ENCODE measurements at regions of chr21 and their contacts with region 1.

Region 1: DNA sequence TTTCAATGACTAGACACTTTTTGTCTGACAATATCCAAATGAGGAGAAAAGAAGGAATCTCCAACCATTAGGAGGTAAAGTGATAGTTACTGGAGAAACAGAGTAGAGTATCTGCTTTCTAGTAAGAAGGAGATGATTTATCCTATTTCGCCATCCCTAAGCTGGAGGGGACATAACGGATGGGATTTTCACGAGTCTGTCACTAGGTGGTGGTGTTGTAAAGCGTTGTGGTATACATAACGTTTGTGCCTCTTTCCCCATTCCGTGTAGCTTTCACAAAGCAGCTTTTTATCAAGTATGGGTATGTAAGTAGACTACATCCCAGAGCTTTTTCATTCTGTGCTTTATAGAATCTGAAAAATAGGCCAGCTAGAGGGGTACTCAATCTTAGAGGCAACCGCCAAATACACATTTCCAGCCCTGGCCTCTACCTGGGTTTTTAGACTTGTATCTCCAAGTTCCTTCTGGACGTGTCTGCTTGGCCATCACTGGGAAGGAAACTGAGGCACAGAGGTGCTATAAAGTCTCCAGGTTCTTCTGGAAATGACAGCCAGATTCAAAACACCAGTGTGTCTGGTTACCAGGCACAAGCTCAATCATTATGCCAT is 33.3 kb upstream of the FAM3B start:
- DNase-seq: peak; percentile 41 to 66 (median 65)
- H3K4me3 ChIP-seq: no peak overlapping the region
- H3K4me3 Mint-ChIP-seq: no peak overlapping the region
- H3K27ac ChIP-seq: no peak overlapping the region
- H3K27ac Mint-ChIP-seq: no peak overlapping the region
- H3K4me1 ChIP-seq: no peaks in the 10 kb centered on the region
- H3K4me1 Mint-ChIP-seq: peaks cover 0 to 1% (median 0%) of the 10 kb centered on the region in 4 donors
- H3K27me3 ChIP-seq: no peaks in the 10 kb centered on the region
- H3K27me3 Mint-ChIP-seq: peaks cover 9 to 24% of the 10 kb centered on the region in 2 donors

Region 2: DNA sequence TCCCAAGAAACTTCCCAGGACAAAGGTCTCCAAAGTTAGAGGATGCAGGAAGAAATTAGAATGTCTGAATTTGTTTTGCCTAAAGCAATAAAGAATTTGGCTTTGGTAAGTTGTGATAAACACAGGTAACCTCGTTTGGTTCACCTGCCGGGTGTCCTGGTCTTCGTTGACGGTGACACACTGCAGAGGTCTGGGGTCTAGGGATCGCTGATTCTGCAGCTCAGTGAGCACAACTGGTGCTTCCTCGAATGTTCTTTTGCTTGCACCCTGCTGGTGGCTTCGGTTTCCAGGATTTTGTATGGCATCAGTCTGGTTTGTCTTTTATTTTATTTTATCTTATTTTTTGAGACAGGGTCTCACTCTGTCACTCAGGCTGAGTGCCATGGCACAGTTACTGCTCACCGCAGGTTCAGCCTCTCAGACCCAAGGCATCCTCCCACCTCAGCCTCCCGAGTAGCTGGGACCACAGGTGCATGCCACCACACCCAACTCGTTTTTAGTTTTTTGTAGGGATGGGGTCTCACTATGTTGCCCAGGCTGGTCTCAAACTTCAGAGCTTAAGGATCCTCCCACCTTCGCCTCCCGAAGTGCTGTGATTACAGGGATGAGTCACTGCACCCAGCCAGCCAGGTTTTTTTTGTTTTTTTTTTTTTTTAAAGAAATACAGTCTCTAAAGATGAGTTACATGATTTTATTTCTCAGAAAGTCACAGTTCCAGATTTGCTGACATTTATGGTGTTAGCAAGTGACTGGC is 86.5 kb before region 1 on chr21:
- CTCF ChIA-PET with region 1: no interaction called
- POLR2A ChIA-PET with region 1: no interaction called
- intact Hi-C with region 1: no loop called
- DNase-seq: no peak
- H3K4me3 ChIP-seq: no peak overlapping the region
- H3K4me3 Mint-ChIP-seq: no peak overlapping the region
- H3K27ac ChIP-seq: no peak overlapping the region
- H3K27ac Mint-ChIP-seq: no peak overlapping the region
- H3K4me1 ChIP-seq: no peaks in the 10 kb centered on the region
- H3K4me1 Mint-ChIP-seq: no peaks in the 10 kb centered on the region
- H3K27me3 ChIP-seq: no peaks in the 10 kb centered on the region
- H3K27me3 Mint-ChIP-seq: peaks cover 7 to 11% of the 10 kb centered on the region in 2 donors

Region 3: GRCh38 chr21:41228021-41228400 is 55.3 kb before region 1 on chr21:
- CTCF ChIA-PET with region 1: no interaction called
- POLR2A ChIA-PET with region 1: no interaction called
- intact Hi-C with region 1: no loop called
- DNase-seq: no peak
- H3K4me3 ChIP-seq: no peak overlapping the region
- H3K4me3 Mint-ChIP-seq: no peak overlapping the region
- H3K27ac ChIP-seq: no peak overlapping the region
- H3K27ac Mint-ChIP-seq: no peak overlapping the region
- H3K4me1 ChIP-seq: no peaks in the 10 kb centered on the region
- H3K4me1 Mint-ChIP-seq: no peaks in the 10 kb centered on the region
- H3K27me3 ChIP-seq: no peaks in the 10 kb centered on the region
- H3K27me3 Mint-ChIP-seq: peaks cover 6 to 14% of the 10 kb centered on the region in 2 donors

Region 4: GRCh38 chr21:41241316-41242035 is 41.8 kb before region 1 on chr21:
- CTCF ChIA-PET with region 1: no interaction called
- POLR2A ChIA-PET with region 1: no interaction called
- intact Hi-C with region 1: no loop called
- DNase-seq: no peak
- H3K4me3 ChIP-seq: no peak overlapping the region
- H3K4me3 Mint-ChIP-seq: no peak overlapping the region
- H3K27ac ChIP-seq: no peak overlapping the region
- H3K27ac Mint-ChIP-seq: no peak overlapping the region
- H3K4me1 ChIP-seq: no peaks in the 10 kb centered on the region
- H3K4me1 Mint-ChIP-seq: no peaks in the 10 kb centered on the region
- H3K27me3 ChIP-seq: no peaks in the 10 kb centered on the region
- H3K27me3 Mint-ChIP-seq: peaks cover 0 to 3% of the 10 kb centered on the region in 2 donors

Region 5: DNA sequence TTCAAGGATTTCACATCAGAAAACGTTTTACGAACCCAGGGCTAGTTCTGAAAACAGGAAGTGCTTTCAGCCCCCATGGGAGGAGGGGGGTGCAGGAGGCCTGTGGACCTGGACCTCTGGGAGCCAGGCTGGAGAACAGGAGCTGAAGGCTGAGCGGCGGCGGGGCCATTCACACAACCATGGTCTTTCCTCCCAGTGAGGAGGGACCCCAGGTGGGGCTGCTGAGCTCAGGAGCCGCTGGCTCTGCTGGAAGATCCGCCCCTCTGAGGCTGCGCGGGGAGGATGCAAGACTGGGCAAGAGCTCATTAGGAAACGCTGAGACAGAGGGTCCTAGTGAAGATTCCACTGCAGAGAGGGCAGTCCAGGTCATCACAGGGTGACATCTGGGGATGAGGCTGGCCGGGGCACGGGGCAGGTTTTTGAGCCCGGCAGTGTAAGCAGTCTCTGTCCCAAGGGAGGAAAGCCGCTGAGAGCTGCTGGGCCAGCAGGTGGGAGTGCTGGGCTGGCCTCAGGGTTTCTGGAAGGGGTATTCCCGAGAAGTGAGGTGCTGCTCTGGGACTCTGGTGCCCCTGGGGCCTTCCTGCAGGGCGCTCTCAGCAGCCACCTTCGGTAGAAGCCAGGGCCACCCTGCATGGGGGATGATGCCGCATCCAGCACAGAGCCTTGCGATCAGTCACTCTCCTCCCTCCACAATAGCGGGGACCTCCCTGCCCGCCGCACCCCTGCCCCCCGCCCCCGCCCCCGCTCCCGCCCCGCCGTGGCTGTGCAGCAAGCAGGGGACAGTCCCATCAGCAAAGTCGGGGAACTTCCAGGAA is 86.0 kb after region 1 on chr21:
- CTCF ChIA-PET with region 1: interaction called, 12 read pairs
- POLR2A ChIA-PET with region 1: interaction called, 11 read pairs
- intact Hi-C with region 1: no loop called
- DNase-seq: peak in 4 of 5 donors; percentile 22 to 65 (median 34)
- H3K4me3 ChIP-seq: peak overlapping the region; percentile 57 to 80
- H3K4me3 Mint-ChIP-seq: peak overlapping the region; percentile 87 to 97 (median 90)
- H3K27ac ChIP-seq: peak overlapping the region; percentile 69
- H3K27ac Mint-ChIP-seq: peak overlapping the region; percentile 90 to 96 (median 94)
- H3K4me1 ChIP-seq: peaks cover 68% of the 10 kb centered on the region
- H3K4me1 Mint-ChIP-seq: peaks cover 47 to 90% (median 70%) of the 10 kb centered on the region in 4 donors
- H3K27me3 ChIP-seq: no peaks in the 10 kb centered on the region
- H3K27me3 Mint-ChIP-seq: no peaks in the 10 kb centered on the region

Region 6: GRCh38 chr21:41411449-41412089 is 128.3 kb after region 1 on chr21:
- CTCF ChIA-PET with region 1: interaction called, 15 read pairs
- POLR2A ChIA-PET with region 1: no interaction called
- intact Hi-C with region 1: no loop called
- DNase-seq: peak in 1 of 5 donors; percentile 12
- H3K4me3 ChIP-seq: no peak overlapping the region
- H3K4me3 Mint-ChIP-seq: no peak overlapping the region
- H3K27ac ChIP-seq: no peak overlapping the region
- H3K27ac Mint-ChIP-seq: peak overlapping the region in 3 of 7 donors; percentile 19 to 35 (median 29)
- H3K4me1 ChIP-seq: no peaks in the 10 kb centered on the region
- H3K4me1 Mint-ChIP-seq: peaks cover 0 to 7% (median 0%) of the 10 kb centered on the region in 4 donors
- H3K27me3 ChIP-seq: no peaks in the 10 kb centered on the region
- H3K27me3 Mint-ChIP-seq: no peaks in the 10 kb centered on the region

Region 7: DNA sequence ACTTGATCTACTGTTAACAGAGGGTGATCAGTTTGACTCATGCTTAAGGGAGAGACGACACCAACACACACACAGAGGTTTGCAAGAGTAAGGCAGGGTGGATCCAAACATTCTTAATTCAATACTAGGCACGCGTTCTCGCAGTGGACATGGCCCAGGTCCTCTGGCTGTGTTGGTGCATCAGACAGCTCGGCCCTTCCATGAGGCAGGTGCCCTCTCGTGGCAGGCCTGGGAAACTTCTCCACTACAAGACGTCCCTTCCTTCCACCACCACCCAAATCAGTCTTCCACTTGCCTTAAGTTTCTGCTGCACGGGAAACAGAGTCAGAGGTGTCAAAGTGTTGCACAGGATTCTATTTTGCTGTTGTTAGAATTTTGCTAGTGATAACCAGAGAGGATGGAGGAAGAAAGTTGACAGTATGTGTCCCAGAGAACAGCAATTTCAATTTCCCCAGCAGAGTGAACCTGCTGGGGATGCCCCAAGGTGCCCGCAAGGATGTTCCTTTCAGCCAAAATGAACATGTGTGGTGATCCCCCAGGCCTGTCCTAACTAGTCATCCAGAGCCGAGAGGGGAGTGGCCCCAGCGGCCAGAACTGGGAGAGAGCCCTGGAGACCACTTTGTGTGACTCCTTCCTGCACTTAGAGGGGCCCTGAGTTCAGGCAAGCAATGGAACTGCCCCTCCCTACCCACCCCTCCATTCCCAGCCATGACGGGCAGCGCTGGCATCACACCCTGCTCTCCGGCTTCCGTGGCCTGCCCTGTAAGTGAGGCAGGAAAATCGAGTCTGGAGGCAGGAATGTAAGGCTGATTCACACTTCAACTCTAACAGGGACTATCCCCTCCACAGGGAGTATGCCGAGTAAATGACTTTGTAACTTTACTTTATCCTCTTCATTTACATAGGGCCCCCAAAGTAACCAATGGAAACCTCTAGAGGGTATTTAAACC is 177.5 kb after region 1 on chr21:
- CTCF ChIA-PET with region 1: interaction called, 168 read pairs
- POLR2A ChIA-PET with region 1: interaction called, 10 read pairs
- intact Hi-C with region 1: no loop called
- DNase-seq: peak; percentile 37 to 52 (median 46)
- H3K4me3 ChIP-seq: no peak overlapping the region
- H3K4me3 Mint-ChIP-seq: no peak overlapping the region
- H3K27ac ChIP-seq: no peak overlapping the region
- H3K27ac Mint-ChIP-seq: peak overlapping the region in 5 of 7 donors; percentile 1 to 50 (median 39)
- H3K4me1 ChIP-seq: no peaks in the 10 kb centered on the region
- H3K4me1 Mint-ChIP-seq: peaks cover 0 to 9% (median 6%) of the 10 kb centered on the region in 4 donors
- H3K27me3 ChIP-seq: no peaks in the 10 kb centered on the region
- H3K27me3 Mint-ChIP-seq: no peaks in the 10 kb centered on the region

Region 8: DNA sequence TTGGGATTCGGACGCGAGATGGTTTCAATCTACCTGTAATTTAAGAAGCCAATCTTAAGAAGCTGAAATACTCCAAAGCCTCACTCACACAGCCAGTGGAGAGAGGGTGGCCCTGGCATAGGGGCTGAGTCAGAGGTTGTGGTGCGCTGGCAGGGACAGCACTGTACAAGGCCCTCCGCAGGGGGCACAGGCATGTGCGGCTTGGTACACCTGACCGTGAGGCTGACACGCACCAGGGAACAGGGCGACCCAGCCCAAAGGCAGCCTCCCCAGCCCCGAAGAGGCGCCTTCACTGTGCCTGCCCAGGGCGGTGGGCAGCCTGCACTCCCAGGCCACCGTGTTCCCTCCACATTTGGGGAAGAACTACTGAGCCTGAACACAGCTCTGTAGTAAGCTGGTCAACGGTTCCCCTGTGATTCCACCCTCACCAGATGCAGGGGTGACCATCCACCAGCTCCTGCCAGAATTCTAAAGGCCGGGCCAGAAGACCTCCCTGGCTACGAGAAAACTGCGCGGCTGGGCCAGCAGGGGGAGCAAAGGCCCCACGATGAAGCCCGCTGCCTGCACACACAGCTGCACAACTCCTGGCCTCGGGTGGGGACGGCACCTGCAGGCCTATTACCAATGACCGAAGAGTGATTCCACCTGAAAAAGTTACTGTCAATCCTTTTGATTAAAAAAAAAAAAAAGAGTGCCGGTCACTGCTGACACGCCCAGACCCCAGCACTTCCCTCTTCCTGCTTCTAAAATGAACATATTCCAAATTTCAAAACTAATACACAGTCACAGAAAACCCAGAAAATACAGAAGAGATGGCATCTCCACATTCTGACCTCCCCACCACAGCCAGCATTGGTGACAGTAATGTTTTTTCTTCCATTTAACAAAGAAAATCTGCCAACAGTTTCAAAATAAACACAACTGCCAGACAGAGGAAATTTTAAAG is 533.2 kb after region 1 on chr21:
- CTCF ChIA-PET with region 1: interaction called, 19 read pairs
- POLR2A ChIA-PET with region 1: no interaction called
- intact Hi-C with region 1: no loop called
- DNase-seq: peak; percentile 41 to 54 (median 46)
- H3K4me3 ChIP-seq: no peak overlapping the region
- H3K4me3 Mint-ChIP-seq: no peak overlapping the region
- H3K27ac ChIP-seq: no peak overlapping the region
- H3K27ac Mint-ChIP-seq: peak overlapping the region in 2 of 7 donors; percentile 31 to 47
- H3K4me1 ChIP-seq: no peaks in the 10 kb centered on the region
- H3K4me1 Mint-ChIP-seq: peaks cover 0 to 8% (median 2%) of the 10 kb centered on the region in 4 donors
- H3K27me3 ChIP-seq: no peaks in the 10 kb centered on the region
- H3K27me3 Mint-ChIP-seq: no peaks in the 10 kb centered on the region

Region 9: DNA sequence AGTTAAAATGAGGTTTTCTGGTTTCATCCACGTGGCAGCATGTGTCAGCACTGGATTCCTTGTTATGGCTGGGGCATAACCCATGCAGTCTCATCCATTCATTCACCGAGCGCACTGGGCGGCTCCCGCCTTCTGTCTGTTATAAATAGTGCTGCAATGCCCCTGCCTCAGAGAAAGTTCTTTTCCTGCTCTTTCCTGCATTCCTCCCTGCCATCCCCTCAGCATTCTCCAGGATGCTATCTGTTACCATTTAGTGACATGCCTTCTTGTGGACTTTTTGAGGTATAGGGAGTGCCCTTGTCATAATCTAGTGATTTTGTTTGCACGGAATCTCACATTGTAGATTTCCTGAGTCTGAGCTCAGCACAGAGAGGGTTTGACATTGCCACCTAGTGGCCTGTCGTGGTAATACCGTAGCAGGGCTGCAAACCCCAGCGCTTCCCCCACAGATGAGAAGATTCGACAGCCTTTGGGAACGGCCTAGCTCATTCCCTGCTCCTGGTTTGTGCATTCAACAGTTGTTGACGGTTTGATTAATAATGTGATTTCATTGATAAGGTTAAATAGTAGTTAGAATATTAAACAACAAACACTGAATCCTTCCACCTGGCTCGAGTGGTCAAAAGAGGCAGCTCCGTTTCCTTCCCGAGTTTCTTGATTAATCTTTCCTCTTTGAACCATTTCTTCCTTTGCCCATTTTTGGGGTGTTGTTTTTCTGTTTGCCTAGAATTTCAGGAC is 834.1 kb after region 1 on chr21:
- CTCF ChIA-PET with region 1: interaction called, 18 read pairs
- POLR2A ChIA-PET with region 1: interaction called, 3 read pairs
- intact Hi-C with region 1: loop called (anchors 1 kb)
- DNase-seq: peak; percentile 48 to 72 (median 64)
- H3K4me3 ChIP-seq: no peak overlapping the region
- H3K4me3 Mint-ChIP-seq: peak overlapping the region in 4 of 8 donors; percentile 32 to 68 (median 58)
- H3K27ac ChIP-seq: no peak overlapping the region
- H3K27ac Mint-ChIP-seq: peak overlapping the region in 2 of 7 donors; percentile 1 to 41
- H3K4me1 ChIP-seq: peaks cover 4% of the 10 kb centered on the region
- H3K4me1 Mint-ChIP-seq: peaks cover 7 to 10% (median 9%) of the 10 kb centered on the region in 4 donors
- H3K27me3 ChIP-seq: peaks cover 18% of the 10 kb centered on the region
- H3K27me3 Mint-ChIP-seq: peaks cover 43 to 49% of the 10 kb centered on the region in 2 donors